ENCODE measurements at regions of chr17 and their contacts with region 1.

Region 1: DNA sequence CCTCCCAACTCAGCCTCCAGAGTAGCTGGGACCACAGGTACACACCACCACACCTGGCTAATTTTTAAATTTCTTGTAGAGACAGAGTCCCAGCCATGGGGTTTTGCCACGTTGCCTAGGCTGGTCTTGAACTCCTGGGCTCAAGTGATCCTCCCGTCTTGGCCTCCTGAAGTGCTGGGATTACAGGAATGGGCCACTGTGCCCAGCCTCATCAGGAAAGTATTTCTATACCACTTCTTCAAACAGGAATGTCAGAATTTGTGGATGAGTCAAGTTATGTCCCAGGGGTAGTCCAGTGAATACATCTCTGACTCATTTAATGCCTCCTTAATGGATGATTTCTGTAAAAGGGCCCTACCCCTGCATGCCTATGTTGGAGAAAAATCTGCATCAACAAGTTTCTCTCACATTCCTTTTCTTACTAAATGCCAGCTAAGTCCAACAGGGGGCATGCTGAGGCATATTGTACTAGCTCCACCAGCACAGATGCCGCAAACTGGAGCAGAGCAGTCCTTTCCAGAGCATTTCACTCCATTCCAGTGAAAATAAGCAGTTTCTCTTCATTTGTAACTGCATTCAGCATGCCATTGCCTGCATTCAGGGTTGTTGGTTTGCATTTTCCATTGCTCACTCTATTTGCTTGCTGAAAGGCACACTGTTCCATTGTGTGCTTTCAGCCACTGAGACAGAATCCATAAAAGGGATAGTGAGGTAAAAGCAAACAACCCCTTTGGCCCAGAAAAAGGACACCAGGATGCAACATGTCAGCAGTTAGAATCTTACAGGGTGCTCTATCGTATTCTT is 5.3 kb upstream of the CAVIN1 start:
- DNase-seq: no peak
- ATAC-seq: peak; percentile 87
- H3K4me3 ChIP-seq: no peak overlapping the region
- H3K27ac ChIP-seq: no peak overlapping the region
- H3K4me1 ChIP-seq: no peaks in the 10 kb centered on the region
- H3K27me3 ChIP-seq: peaks cover 0 to 2% of the 10 kb centered on the region in 2 experiments; a peak in 2 of 4 replicates
- CTCF ChIP-seq: peak; percentile 73 to 79 (median 75)
- EP300 ChIP-seq: no peak
- POLR2A ChIP-seq: no peak
- RAD21 ChIP-seq: peak; percentile 76

Region 2: GRCh38 chr17:42287926-42288802 is 140.2 kb before region 1 on chr17 and contains the start of gene STAT5A:
- CTCF ChIA-PET with region 1: no interaction called
- POLR2A ChIA-PET with region 1: no interaction called
- RAD21 ChIA-PET with region 1: no interaction called
- SMC1A ChIA-PET with region 1: no interaction called
- in situ Hi-C with region 1: no loop called
- intact Hi-C with region 1: no loop called
- DNase-seq: no peak
- ATAC-seq: peak; percentile 85
- H3K4me3 ChIP-seq: peak within 1 kb of the TSS; percentile 91
- H3K27ac ChIP-seq: peak within 1 kb of the TSS; percentile 79
- H3K4me1 ChIP-seq: peaks cover 23% of the 10 kb centered on the region
- H3K27me3 ChIP-seq: no peaks in the 10 kb centered on the region
- CTCF ChIP-seq: no peak
- EP300 ChIP-seq: no peak
- POLR2A ChIP-seq: peak; percentile 80
- RAD21 ChIP-seq: no peak
- polyA plus RNA-seq, gene STAT5A: 14.8 to 24.0 TPM

Region 3: GRCh38 chr17:42438600-42439567 is 10.5 kb after region 1 on chr17:
- CTCF ChIA-PET with region 1: interaction called, 17 read pairs
- POLR2A ChIA-PET with region 1: interaction called, 9 read pairs
- RAD21 ChIA-PET with region 1: interaction called, 4 read pairs
- SMC1A ChIA-PET with region 1: interaction called, 9 read pairs
- in situ Hi-C with region 1: no loop called
- intact Hi-C with region 1: no loop called
- DNase-seq: no peak
- ATAC-seq: peak; percentile 82
- H3K4me3 ChIP-seq: no peak overlapping the region
- H3K27ac ChIP-seq: no peak overlapping the region
- H3K4me1 ChIP-seq: 0 out of 2 replicates have a peak, but pooled peaks cover 4% of the 10 kb centered on the region
- H3K27me3 ChIP-seq: no peaks in the 10 kb centered on the region
- CTCF ChIP-seq: peak; percentile 30 to 56 (median 47); a peak in 5 of 6 replicates
- EP300 ChIP-seq: no peak
- POLR2A ChIP-seq: no peak
- RAD21 ChIP-seq: peak; percentile 61

Region 4: GRCh38 chr17:42459256-42459800 is 31.0 kb after region 1 on chr17:
- CTCF ChIA-PET with region 1: interaction called, 10 read pairs
- POLR2A ChIA-PET with region 1: interaction called, 3 read pairs
- RAD21 ChIA-PET with region 1: interaction called, 7 read pairs
- SMC1A ChIA-PET with region 1: interaction called, 10 read pairs
- in situ Hi-C with region 1: no loop called
- intact Hi-C with region 1: no loop called
- DNase-seq: no peak
- ATAC-seq: peak; percentile 57
- H3K4me3 ChIP-seq: peak overlapping the region; percentile 88
- H3K27ac ChIP-seq: peak overlapping the region; percentile 81
- H3K4me1 ChIP-seq: peaks cover 16% of the 10 kb centered on the region
- H3K27me3 ChIP-seq: no peaks in the 10 kb centered on the region
- CTCF ChIP-seq: peak; percentile 51 to 54 (median 54)
- EP300 ChIP-seq: no peak
- POLR2A ChIP-seq: no peak
- RAD21 ChIP-seq: no peak

Region 5: GRCh38 chr17:42494673-42495072 is 66.3 kb after region 1 on chr17:
- CTCF ChIA-PET with region 1: interaction called, 11 read pairs
- POLR2A ChIA-PET with region 1: no interaction called
- RAD21 ChIA-PET with region 1: no interaction called
- SMC1A ChIA-PET with region 1: interaction called, 4 read pairs
- in situ Hi-C with region 1: no loop called
- intact Hi-C with region 1: no loop called
- DNase-seq: no peak
- ATAC-seq: no peak
- H3K4me3 ChIP-seq: no peak overlapping the region
- H3K27ac ChIP-seq: no peak overlapping the region
- H3K4me1 ChIP-seq: no peaks in the 10 kb centered on the region
- H3K27me3 ChIP-seq: no peaks in the 10 kb centered on the region
- CTCF ChIP-seq: no peak
- EP300 ChIP-seq: no peak
- POLR2A ChIP-seq: no peak
- RAD21 ChIP-seq: no peak

Region 6: GRCh38 chr17:42517516-42517915 is 89.2 kb after region 1 on chr17:
- CTCF ChIA-PET with region 1: interaction called, 120 read pairs
- POLR2A ChIA-PET with region 1: interaction called, 5 read pairs
- RAD21 ChIA-PET with region 1: interaction called, 11 read pairs
- SMC1A ChIA-PET with region 1: interaction called, 16 read pairs
- in situ Hi-C with region 1: loop called (anchors 5 kb)
- intact Hi-C with region 1: loop called (anchors 1 kb)
- DNase-seq: no peak
- ATAC-seq: peak; percentile 85
- H3K4me3 ChIP-seq: no peak overlapping the region
- H3K27ac ChIP-seq: no peak overlapping the region
- H3K4me1 ChIP-seq: peaks cover 4% of the 10 kb centered on the region
- H3K27me3 ChIP-seq: no peaks in the 10 kb centered on the region
- CTCF ChIP-seq: peak; percentile 93 to 98 (median 98); a peak in 5 of 6 replicates
- EP300 ChIP-seq: no peak
- POLR2A ChIP-seq: no peak
- RAD21 ChIP-seq: peak; percentile 85

Region 7: DNA sequence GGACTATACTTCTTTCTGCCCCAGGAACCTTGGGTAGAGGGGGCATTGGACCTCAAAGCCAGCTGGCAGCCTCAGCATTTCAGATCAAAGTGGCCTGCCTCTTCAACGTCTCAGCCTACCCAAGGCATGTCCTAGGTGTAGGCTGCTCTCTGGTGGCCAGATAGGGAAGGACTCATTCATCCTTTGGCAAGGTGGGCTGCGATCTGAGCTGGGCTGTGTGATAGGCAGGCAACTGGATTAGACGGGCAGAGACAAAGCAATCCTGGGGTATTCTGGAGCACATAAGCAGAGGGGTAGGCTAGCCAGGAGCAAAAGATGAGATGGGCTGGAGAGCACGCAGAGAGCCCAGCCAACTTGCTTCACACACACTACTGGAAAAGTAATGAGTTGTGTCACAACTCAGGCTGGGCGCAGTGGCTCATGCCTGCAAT is 98.9 kb after region 1 on chr17:
- CTCF ChIA-PET with region 1: interaction called, 28 read pairs
- POLR2A ChIA-PET with region 1: interaction called, 3 read pairs
- RAD21 ChIA-PET with region 1: interaction called, 13 read pairs
- SMC1A ChIA-PET with region 1: interaction called, 19 read pairs
- in situ Hi-C with region 1: loop called (anchors 5 kb)
- intact Hi-C with region 1: loop called (anchors 1 kb)
- DNase-seq: peak; percentile 51
- ATAC-seq: peak; percentile 91
- H3K4me3 ChIP-seq: no peak overlapping the region
- H3K27ac ChIP-seq: no peak overlapping the region
- H3K4me1 ChIP-seq: peaks cover 22% of the 10 kb centered on the region
- H3K27me3 ChIP-seq: no peaks in the 10 kb centered on the region
- CTCF ChIP-seq: peak; percentile 86 to 93 (median 89); a peak in 5 of 6 replicates
- EP300 ChIP-seq: no peak
- POLR2A ChIP-seq: no peak
- RAD21 ChIP-seq: peak; percentile 96

Region 8: DNA sequence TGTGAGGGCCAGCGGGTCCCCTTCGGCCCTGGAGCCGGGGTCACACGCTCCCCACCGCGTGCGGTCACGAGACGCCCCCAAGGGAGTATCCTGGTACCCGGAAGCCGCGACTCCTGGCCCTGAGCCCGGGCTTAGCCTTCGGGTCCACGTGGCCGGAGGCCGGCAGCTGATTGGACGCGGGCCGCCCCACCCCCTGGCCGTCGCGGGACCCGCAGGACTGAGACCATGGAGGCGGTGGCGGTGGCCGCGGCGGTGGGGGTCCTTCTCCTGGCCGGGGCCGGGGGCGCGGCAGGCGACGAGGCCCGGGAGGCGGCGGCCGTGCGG is 107.7 kb after region 1 on chr17 and contains the start of gene NAGLU:
- CTCF ChIA-PET with region 1: interaction called, 10 read pairs
- POLR2A ChIA-PET with region 1: interaction called, 3 read pairs
- RAD21 ChIA-PET with region 1: interaction called, 3 read pairs
- SMC1A ChIA-PET with region 1: interaction called, 3 read pairs
- in situ Hi-C with region 1: no loop called
- intact Hi-C with region 1: no loop called
- DNase-seq: peak; percentile 72
- ATAC-seq: peak; percentile 91
- H3K4me3 ChIP-seq: peak within 1 kb of the TSS; percentile 77
- H3K27ac ChIP-seq: peak within 1 kb of the TSS; percentile 75
- H3K4me1 ChIP-seq: peaks cover 19% of the 10 kb centered on the region
- H3K27me3 ChIP-seq: no peaks in the 10 kb centered on the region
- CTCF ChIP-seq: no peak
- EP300 ChIP-seq: 0 out of 4 replicates have a peak, but pooled peaks of 1 of the 2 experiments have one; percentile 59
- POLR2A ChIP-seq: peak; percentile 73
- RAD21 ChIP-seq: no peak
- polyA plus RNA-seq, gene NAGLU: 0.23 to 0.69 TPM